ENCODE measurements at regions of chr6 and their contacts with region 1.

Region 1: GRCh38 chr6:11653028-11653583 is 115.6 kb downstream of the TMEM170B start:
- DNase-seq: peak; percentile 56
- CTCF ChIP-seq: no peak

Region 2: DNA sequence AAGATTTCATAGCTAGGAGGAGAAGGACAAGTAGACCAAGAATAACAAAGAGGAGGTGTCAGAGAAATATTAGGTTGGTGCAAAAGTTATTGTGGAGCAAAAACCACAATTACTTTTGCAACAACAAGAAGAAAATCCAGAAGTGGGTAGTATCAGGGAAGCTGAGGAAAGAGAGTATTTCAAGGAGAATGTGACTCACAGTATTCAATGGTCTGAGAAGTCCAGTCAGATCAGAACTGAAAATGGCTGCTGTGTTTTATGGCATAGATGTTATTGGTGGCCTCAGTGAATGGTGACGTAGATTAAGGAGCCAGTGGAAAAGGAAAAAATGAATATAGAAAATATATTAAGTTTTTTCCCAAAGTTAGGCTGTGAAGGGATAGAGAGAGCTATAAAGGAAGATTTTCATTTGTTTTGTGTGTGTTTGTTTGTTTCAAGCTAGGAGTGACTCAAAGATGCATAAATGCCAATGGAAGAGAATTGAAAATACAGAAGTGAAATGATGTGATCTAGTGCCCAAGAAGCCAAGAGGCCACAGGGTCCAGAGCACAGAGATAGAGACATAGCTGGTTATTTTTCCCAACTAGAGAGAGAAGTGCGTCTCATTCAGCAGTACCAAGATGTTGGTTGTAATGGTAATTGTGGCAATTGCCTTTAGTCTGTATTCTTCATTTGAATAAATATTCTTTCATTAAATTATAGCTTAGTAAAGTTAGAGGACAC is 12.7 kb after region 1 on chr6:
- CTCF ChIA-PET with region 1: interaction called, 43 read pairs
- POLR2A ChIA-PET with region 1: no interaction called
- DNase-seq: no peak
- CTCF ChIP-seq: no peak

Region 3: GRCh38 chr6:12075067-12075563 is 422.0 kb after region 1 on chr6:
- CTCF ChIA-PET with region 1: interaction called, 10 read pairs
- POLR2A ChIA-PET with region 1: no interaction called
- DNase-seq: no peak
- CTCF ChIP-seq: peak; percentile 43

Region 4: GRCh38 chr6:12289933-12290820 is 637.1 kb after region 1 on chr6 and contains the start of gene EDN1:
- CTCF ChIA-PET with region 1: interaction called, 80 read pairs
- POLR2A ChIA-PET with region 1: no interaction called
- DNase-seq: peak; percentile 74
- CTCF ChIP-seq: peak; percentile 53

Measured in GM10248 (cell line).